ENCODE measurements at regions of chr14 and their contacts with region 1.

Region 1: DNA sequence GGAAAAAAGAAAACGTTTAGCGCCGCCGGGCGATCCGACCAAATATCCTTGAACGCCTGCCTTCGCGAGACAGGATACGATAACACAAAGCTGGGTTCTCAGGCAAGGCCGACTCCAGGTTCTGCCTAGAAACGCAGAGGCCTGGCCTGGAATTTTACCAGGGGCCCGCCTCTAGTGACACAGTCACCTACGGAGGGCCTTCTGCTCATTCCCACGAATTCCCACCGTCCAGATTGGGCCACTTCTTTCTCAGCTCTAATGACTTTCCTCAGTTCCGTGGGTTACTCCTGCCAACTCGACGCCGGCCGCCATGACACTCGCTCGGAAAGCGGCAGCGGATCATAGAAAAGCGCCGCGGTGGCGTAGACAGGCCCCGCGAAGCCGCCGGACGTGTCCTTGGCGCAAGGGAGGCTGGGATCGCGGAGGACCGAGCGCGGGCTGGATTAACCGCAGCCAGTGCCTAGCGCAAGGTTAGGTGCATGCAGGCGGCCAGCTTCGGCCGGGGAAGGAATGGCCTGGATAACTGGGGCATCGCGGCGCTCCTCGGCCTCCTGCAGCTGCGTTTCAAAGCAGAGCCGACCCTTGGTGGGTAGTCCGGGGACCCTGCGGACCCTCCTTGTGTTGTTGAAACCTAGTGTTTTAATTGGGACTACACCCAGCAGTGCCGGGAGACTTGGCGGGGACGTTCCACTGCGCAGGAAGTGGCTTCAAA is at the start of gene TRIP11:
- DNase-seq: peak; percentile 93
- H3K4me3 Mint-ChIP-seq: peak within 1 kb of the TSS; percentile 97
- H3K27ac Mint-ChIP-seq: peak within 1 kb of the TSS; percentile 99
- H3K4me1 Mint-ChIP-seq: peaks cover 27% of the 10 kb centered on the region
- H3K27me3 Mint-ChIP-seq: no peaks in the 10 kb centered on the region
- total RNA-seq, gene TRIP11: 37.0 and 41.7 TPM in 2 replicates

Region 2: DNA sequence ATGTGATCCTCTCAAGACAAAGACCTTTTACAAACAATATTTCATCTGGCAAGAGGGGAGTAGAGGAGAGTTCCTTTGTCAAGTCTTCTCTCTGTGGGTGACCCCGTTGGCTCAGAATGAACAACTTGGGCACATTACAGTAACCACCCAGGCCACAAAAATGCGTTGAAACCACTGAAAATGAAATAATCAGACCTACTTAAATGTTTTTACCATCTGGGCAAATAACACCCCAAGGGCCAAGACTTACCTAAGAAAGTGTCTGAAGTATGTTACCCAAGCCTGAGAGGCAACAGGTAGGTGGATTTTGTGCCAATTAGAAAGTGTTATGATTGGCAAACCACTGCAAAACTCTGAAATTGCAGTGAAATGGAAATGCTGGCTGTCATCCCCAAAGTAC is 173.8 kb before region 1 on chr14:
- intact Hi-C with region 1: loop called (anchors 2 kb)
- DNase-seq: no peak
- H3K4me3 Mint-ChIP-seq: peak overlapping the region; percentile 89
- H3K27ac Mint-ChIP-seq: peak overlapping the region; percentile 95
- H3K4me1 Mint-ChIP-seq: peaks cover 84% of the 10 kb centered on the region
- H3K27me3 Mint-ChIP-seq: no peaks in the 10 kb centered on the region

Region 3: GRCh38 chr14:92106143-92106926 is 66.5 kb after region 1 on chr14 and contains the start of gene ATXN3:
- intact Hi-C with region 1: loop called (anchors 1 kb)
- DNase-seq: peak; percentile 94
- H3K4me3 Mint-ChIP-seq: peak within 1 kb of the TSS; percentile 99
- H3K27ac Mint-ChIP-seq: peak within 1 kb of the TSS; percentile 96
- H3K4me1 Mint-ChIP-seq: peaks cover 29% of the 10 kb centered on the region
- H3K27me3 Mint-ChIP-seq: no peaks in the 10 kb centered on the region
- total RNA-seq, gene ATXN3: 31.1 and 35.9 TPM in 2 replicates